ENCODE measurements at regions of chr17 and their contacts with region 1.

Region 1: DNA sequence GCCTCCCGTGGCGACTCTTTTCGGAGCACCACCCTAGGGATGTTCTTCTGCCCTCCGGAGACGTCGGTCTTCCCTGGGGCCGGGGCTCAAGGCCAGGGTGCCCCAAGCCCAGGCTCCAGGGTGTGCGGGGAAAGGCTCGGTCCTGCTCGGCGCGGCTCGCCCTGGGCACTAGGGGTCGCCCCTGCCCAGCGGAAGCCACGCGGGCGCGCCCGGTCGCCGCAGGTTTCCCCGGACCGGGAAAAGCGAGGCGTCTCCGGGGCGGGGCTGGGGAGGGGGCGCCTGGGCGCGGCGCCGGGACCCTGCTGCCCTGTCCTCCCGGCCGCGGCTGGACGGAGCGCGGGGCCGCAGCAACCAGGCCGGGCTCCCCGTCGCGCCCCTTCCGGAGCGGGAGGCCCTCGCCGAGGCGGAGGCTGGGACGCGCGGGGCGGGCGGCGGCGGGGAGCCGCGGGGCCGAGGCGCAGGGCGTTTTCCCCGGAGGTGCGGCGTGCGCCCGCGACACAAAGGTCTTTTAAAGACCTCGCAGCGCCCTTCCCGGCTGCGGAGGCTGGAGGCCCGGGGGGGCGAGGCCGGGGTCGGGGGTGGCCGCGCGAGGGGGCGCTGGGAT is 76.4 kb downstream of the MRC2 start:
- ATAC-seq: peak; percentile 88 to 97 (median 91)
- H3K4me3 ChIP-seq: peak overlapping the region; percentile 51 to 97 (median 67)
- H3K27ac ChIP-seq: peak overlapping the region; percentile 53 to 79
- H3K4me1 ChIP-seq: peaks cover 21% of the 10 kb centered on the region in 2 donors

Region 2: GRCh38 chr17:62539783-62540182 is 164.1 kb before region 1 on chr17:
- in situ Hi-C with region 1: no loop called
- ATAC-seq: peak in 2 of 8 experiments; percentile 25 to 28
- H3K4me3 ChIP-seq: no peak overlapping the region
- H3K27ac ChIP-seq: no peak overlapping the region
- H3K4me1 ChIP-seq: no peaks in the 10 kb centered on the region

Region 3: DNA sequence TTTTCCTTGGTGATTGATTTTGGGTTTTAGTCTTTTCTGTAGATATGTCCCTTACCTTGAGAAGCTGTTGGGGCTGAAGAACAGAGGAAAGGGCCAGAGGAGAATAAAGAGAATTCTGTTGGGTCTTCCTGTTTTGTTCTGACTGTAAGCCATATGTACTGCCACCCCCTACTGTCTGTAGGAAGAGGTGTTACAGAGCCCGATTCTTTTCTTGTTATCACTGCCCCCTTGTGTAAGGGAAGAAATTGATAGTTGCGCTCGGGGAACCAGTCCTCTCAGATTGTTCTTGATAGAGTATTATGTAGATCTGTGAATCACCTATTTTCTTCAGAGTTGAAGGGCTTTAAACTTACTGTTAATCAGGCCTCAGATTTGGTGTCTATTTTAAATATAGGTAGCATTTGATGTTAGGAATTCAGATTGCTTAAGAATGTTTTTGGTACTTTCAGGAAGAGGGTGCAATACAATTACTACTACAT is 264.6 kb after region 1 on chr17:
- in situ Hi-C with region 1: loop called (anchors 10 to 25 kb)
- ATAC-seq: peak; percentile 37 to 62 (median 44)
- H3K4me3 ChIP-seq: peak overlapping the region; percentile 57 to 96 (median 73)
- H3K27ac ChIP-seq: no peak overlapping the region
- H3K4me1 ChIP-seq: peaks cover 9 to 17% of the 10 kb centered on the region in 2 donors

Region 4: GRCh38 chr17:62975206-62975605 is 271.3 kb after region 1 on chr17:
- in situ Hi-C with region 1: loop called in 6 of 9 experiments (anchors 10 to 25 kb)
- ATAC-seq: no peak
- H3K4me3 ChIP-seq: no peak overlapping the region
- H3K27ac ChIP-seq: no peak overlapping the region
- H3K4me1 ChIP-seq: peaks cover 0 to 3% of the 10 kb centered on the region in 2 donors